Dorsolateral prefrontal cortex (tissue), 120 donors: ENCODE measurements at regions of chr5 and their contacts with region 1.

Region 1: GRCh38 chr5:142548739-142549275 is 137.1 kb downstream of the FGF1 start:
- DNase-seq: peak in 7 of 10 donors; percentile 16 to 69 (median 48)
- H3K4me3 ChIP-seq: no peak overlapping the region
- H3K27ac ChIP-seq: peak overlapping the region in 1 of 59 donors; percentile 40
- H3K27me3 ChIP-seq: peaks cover 0 to 14% (median 0%) of the 10 kb centered on the region in 45 donors
- CTCF ChIP-seq: peak; percentile 57 to 90 (median 77)

Region 2: GRCh38 chr5:141992349-141992963 is 556.4 kb before region 1 on chr5:
- intact Hi-C with region 1: loop called in 1 of 2 experiments (anchors 10 kb)
- DNase-seq: peak in 7 of 10 donors; percentile 54 to 92 (median 70)
- H3K4me3 ChIP-seq: no peak overlapping the region
- H3K27ac ChIP-seq: peak overlapping the region in 2 of 59 donors; percentile 15 to 60
- H3K27me3 ChIP-seq: no peaks in the 10 kb centered on the region
- CTCF ChIP-seq: peak; percentile 70 to 95 (median 87)

Region 3: GRCh38 chr5:142151436-142152383 is 397.1 kb before region 1 on chr5:
- intact Hi-C with region 1: loop called in 1 of 2 experiments (anchors 5 kb)
- DNase-seq: peak in 4 of 10 donors; percentile 20 to 67 (median 42)
- H3K4me3 ChIP-seq: no peak overlapping the region
- H3K27ac ChIP-seq: no peak overlapping the region
- H3K27me3 ChIP-seq: no peaks in the 10 kb centered on the region
- CTCF ChIP-seq: peak; percentile 68 to 96 (median 82)

Region 4: GRCh38 chr5:142697356-142698255 is 148.8 kb after region 1 on chr5:
- intact Hi-C with region 1: no loop called
- DNase-seq: peak in 2 of 10 donors; percentile 23 to 68
- H3K4me3 ChIP-seq: peak overlapping the region in 52 of 59 donors; percentile 1 to 55 (median 31)
- H3K27ac ChIP-seq: peak overlapping the region; percentile 10 to 89 (median 76)
- H3K27me3 ChIP-seq: no peaks in the 10 kb centered on the region
- CTCF ChIP-seq: peak in 3 of 56 donors; percentile 6 to 9 (median 8)

Region 5: GRCh38 chr5:142743592-142744441 is 195.0 kb after region 1 on chr5:
- intact Hi-C with region 1: no loop called
- DNase-seq: no peak
- H3K4me3 ChIP-seq: no peak overlapping the region
- H3K27ac ChIP-seq: peak overlapping the region in 24 of 59 donors; percentile 3 to 63 (median 27)
- H3K27me3 ChIP-seq: peaks cover 0 to 9% (median 0%) of the 10 kb centered on the region in 45 donors
- CTCF ChIP-seq: no peak